GM18951 (cell line): ENCODE measurements at regions of chr10 and their contacts with region 1.

Region 1: GRCh38 chr10:68212721-68213352 is 19.1 kb downstream of the ATOH7 start:
- POLR2A ChIP-seq: no peak

Region 2: GRCh38 chr10:68261132-68261856 is 48.5 kb after region 1 on chr10:
- in situ Hi-C with region 1: no loop called
- POLR2A ChIP-seq: no peak

Region 3: DNA sequence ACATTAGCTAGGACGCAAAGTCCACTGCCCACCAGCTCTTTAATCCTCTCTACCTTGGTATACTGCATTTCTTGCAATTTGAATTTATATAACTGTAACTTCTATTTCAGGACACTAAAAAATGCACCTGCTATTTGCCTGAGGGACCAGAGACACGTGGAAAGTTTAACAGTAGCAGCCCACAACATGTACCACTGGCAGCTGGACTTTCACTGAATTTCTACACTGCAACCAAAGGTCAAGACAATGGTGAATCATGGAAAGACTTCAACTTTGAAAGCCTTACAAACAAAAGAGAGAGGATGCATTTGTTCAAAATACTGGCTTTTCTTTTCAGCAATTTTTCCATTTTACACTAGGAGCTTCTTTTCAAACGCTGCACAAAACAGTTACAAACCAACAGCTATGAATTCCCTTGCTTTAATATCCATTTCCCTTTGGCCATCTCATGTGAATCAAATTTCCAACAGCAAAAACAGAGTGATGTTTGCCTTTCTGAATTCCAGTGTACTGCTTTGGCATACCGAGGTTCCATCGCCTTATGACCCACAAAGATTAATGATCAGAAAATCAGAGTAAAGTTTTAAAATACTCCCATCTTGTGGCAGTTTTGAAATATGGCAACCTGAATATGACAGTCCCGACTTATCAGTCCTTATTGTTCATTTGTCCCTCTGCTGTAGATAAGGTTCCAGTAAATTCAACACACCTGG is 89.1 kb after region 1 on chr10:
- in situ Hi-C with region 1: loop called (anchors 10 kb)
- POLR2A ChIP-seq: no peak